ENCODE measurements at regions of chr6 and their contacts with region 1.

Region 1: DNA sequence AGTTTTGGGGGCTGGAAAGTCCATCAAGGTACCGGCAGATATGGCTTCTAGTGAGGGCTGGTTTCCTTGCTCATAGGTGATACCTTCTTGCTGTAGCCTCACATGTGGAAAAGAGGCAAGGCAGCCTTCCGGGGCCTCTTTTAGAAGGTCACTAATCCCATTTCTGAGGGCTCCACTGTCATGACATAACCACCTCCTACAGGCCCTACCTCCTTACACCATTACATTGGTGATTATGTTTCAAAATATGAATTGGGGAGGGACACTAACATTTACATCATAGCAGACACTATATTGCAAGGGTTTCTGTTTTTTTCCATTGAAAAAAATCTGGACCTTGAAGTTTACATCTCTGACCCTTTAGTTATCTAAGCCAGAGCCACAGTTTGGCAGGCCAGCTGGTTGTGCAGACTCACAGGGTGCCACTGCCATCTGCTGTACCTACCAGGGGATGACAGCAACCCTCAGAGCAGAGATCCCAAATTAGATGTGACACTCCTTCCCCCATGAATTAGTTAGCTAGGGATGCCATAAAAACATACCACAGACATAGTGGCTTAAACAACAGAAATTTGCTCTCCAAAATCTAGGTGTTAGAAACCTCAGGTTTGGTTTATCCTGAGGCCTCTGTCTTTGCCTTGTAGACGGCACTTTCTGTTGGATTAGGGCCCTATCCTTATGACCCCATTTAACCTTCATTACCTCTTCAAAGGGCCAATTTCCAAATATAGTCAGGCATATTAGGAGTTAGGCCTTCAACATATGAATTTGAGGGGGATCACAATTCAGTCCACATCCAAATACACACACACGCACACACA is 166.4 kb upstream of the RNF217 start:
- DNase-seq: no peak
- ATAC-seq: peak; percentile 96
- H3K4me3 ChIP-seq: no peak overlapping the region
- H3K27ac ChIP-seq: peak overlapping the region; percentile 70
- H3K4me1 ChIP-seq: no peaks in the 10 kb centered on the region
- H3K27me3 ChIP-seq: no peaks in the 10 kb centered on the region
- CTCF ChIP-seq: peak; percentile 91

Region 2: GRCh38 chr6:123415844-123416468 is 1379.9 kb before region 1 on chr6:
- CTCF ChIA-PET with region 1: no interaction called
- POLR2A ChIA-PET with region 1: no interaction called
- in situ Hi-C with region 1: no loop called
- intact Hi-C with region 1: loop called (anchors 5 kb)
- DNase-seq: peak; percentile 33
- ATAC-seq: peak; percentile 70
- H3K4me3 ChIP-seq: no peak overlapping the region
- H3K27ac ChIP-seq: no peak overlapping the region
- H3K4me1 ChIP-seq: no peaks in the 10 kb centered on the region
- H3K27me3 ChIP-seq: peaks cover 2% of the 10 kb centered on the region; the same call in 1 of the 2 replicates
- CTCF ChIP-seq: peak; percentile 79

Region 3: GRCh38 chr6:123777563-123777962 is 1018.3 kb before region 1 on chr6:
- CTCF ChIA-PET with region 1: no interaction called
- POLR2A ChIA-PET with region 1: no interaction called
- in situ Hi-C with region 1: no loop called
- intact Hi-C with region 1: loop called (anchors 5 kb)
- DNase-seq: peak; percentile 18
- ATAC-seq: peak; percentile 84
- H3K4me3 ChIP-seq: no peak overlapping the region
- H3K27ac ChIP-seq: peak overlapping the region; percentile 63; the same call in 1 of the 2 replicates
- H3K4me1 ChIP-seq: peaks cover 7% of the 10 kb centered on the region; the same call in 1 of the 2 replicates
- H3K27me3 ChIP-seq: no peaks in the 10 kb centered on the region
- CTCF ChIP-seq: peak; percentile 70; the same call in 1 of the 2 replicates

Region 4: GRCh38 chr6:123802697-123803496 is 993.0 kb before region 1 on chr6:
- CTCF ChIA-PET with region 1: interaction called, 6 read pairs
- POLR2A ChIA-PET with region 1: no interaction called
- in situ Hi-C with region 1: no loop called
- intact Hi-C with region 1: loop called (anchors 1 kb)
- DNase-seq: peak; percentile 65
- ATAC-seq: peak; percentile 91
- H3K4me3 ChIP-seq: peak overlapping the region; percentile 79
- H3K27ac ChIP-seq: peak overlapping the region; percentile 87
- H3K4me1 ChIP-seq: peaks cover 26% of the 10 kb centered on the region
- H3K27me3 ChIP-seq: no peaks in the 10 kb centered on the region
- CTCF ChIP-seq: peak; percentile 98

Region 5: DNA sequence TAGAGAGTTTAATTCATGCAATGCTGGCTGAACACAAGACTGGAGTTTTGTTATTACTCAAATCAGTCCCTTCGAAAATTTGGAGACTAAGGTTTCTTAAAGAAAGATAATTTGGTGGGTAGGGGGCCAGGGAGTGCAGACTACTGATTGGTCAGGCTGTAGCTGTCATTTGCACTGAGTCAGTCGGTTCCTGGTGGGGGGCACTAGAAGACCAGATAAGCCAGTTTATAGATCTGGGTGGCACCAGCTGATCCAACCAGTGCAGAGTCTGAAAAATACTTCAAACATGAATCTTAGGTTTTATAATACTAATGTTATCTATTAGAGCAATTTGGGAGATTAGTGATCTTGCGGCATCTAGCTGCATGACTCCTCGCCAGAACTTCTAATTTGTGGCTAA is 461.5 kb before region 1 on chr6:
- CTCF ChIA-PET with region 1: no interaction called
- POLR2A ChIA-PET with region 1: no interaction called
- in situ Hi-C with region 1: no loop called
- intact Hi-C with region 1: loop called (anchors 10 kb)
- DNase-seq: no peak
- ATAC-seq: no peak; the same call in 1 of the 2 replicates
- H3K4me3 ChIP-seq: no peak overlapping the region
- H3K27ac ChIP-seq: no peak overlapping the region; the same call in 1 of the 2 replicates
- H3K4me1 ChIP-seq: no peaks in the 10 kb centered on the region
- H3K27me3 ChIP-seq: no peaks in the 10 kb centered on the region
- CTCF ChIP-seq: peak; percentile 18

Region 6: GRCh38 chr6:124535751-124536150 is 260.1 kb before region 1 on chr6:
- CTCF ChIA-PET with region 1: no interaction called
- POLR2A ChIA-PET with region 1: no interaction called
- in situ Hi-C with region 1: no loop called
- intact Hi-C with region 1: loop called (anchors 10 kb)
- DNase-seq: peak; percentile 89
- ATAC-seq: peak; percentile 91
- H3K4me3 ChIP-seq: peak overlapping the region in 1 of 2 experiments; percentile 40; a peak in 3 of 4 replicates
- H3K27ac ChIP-seq: peak overlapping the region; percentile 99
- H3K4me1 ChIP-seq: peaks cover 35% of the 10 kb centered on the region
- H3K27me3 ChIP-seq: no peaks in the 10 kb centered on the region
- CTCF ChIP-seq: no peak

Region 7: DNA sequence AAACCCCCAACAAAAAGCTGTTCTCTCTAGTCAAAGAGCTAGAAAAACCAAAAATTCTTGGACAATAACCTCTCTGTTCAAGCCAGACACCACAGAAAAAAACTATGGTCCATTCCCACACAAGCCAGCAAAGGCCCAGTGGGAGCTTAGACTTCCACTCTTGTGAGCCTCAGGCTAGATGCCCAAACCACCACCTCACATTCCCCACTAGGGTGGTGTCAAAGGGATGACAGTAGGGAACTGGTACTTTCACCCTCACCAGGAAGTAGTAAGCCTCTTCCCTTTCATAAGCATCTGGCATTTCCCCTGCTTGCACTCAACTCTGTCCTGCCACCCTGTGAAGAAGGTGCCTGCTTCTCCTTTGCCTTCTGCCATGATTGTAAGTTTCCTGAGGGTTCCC is 107.9 kb after region 1 on chr6:
- CTCF ChIA-PET with region 1: no interaction called
- POLR2A ChIA-PET with region 1: no interaction called
- in situ Hi-C with region 1: no loop called
- intact Hi-C with region 1: no loop called
- DNase-seq: no peak
- ATAC-seq: no peak
- H3K4me3 ChIP-seq: no peak overlapping the region
- H3K27ac ChIP-seq: no peak overlapping the region
- H3K4me1 ChIP-seq: no peaks in the 10 kb centered on the region
- H3K27me3 ChIP-seq: no peaks in the 10 kb centered on the region
- CTCF ChIP-seq: no peak